Caki2 (cell line): ENCODE measurements at regions of chrX and their contacts with region 1.

Region 1: DNA sequence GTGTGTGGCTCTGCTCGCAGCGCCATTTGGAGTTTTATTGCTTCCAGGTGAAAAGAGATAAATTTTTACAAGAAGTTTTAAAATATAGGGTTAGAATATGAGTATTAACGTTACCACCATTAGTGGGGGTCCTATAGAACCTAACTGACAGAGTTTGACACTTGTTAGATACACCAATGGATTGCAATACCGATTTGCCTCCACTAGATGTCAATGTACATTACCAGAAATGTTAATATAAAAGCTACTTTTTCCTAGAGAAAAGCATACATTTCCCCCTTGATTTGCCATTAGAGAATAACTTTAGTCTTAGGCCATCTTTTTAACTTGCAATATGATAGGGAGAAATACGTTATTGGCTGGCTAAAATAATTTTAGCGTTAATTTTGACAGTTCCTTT is 108.4 kb downstream of the LINC00632 start:
- DNase-seq: no peak

Region 2: DNA sequence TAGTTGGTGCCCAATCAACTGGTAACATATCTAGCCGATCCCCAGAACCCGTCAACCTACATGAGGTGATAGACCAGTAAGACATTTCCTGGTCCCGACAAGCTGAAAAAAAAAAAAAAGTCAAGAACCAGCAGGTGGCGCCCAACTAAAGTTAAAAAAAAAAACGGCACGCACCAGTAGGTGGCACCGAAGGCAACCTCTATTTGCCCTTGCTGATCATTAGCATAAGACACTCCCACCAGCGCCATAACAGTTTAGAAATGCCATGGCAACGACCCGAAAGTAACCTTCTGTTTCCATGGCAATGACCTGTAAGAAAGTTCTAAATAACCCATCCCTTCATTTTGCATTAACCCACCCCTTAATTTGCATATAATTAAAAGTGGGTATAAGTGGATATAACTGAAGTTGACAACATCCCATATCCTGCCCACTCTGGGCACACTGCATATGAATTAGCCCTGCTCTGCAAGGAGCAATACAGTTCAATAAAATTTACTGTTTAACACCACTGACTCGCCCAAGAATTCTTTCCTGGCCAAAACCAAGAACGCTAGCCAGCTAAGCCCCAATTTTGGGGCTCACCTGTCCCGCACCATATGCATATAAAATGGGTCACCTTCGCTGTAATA is 100.6 kb after region 1 on chrX:
- in situ Hi-C with region 1: loop called (anchors 25 kb)
- DNase-seq: peak; percentile 83

Region 3: DNA sequence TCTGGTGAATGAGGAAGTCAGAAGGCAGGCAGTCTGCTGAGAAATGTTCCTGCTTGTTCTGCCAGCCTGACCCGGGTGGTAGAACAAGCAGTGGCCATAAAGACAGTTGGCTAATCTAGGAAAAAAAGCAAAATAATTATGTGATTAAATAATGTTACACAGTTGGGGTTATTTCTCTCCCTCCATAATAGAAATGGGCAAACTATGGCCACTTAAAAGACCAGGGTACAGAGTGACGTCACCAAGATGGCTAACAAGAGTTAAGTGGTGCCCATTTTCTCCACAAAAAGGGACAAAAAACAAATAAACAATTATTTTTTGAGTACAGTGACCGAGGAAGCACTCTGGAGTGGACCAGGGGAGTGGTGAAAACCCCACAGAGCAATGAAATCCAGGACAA is 896.7 kb after region 1 on chrX:
- in situ Hi-C with region 1: no loop called
- DNase-seq: no peak